SK-N-SH (cell line): ENCODE measurements at regions of chr4 and their contacts with region 1.

Region 1: GRCh38 chr4:88456757-88457306 is at the start of gene HERC5:
- DNase-seq: peak; percentile 93
- H3K4me3 ChIP-seq: peak within 1 kb of the TSS; percentile 58 to 68
- H3K27ac ChIP-seq: no peak within 1 kb of the TSS
- H3K4me1 ChIP-seq: peaks cover 0 to 5% of the 10 kb centered on the region in 2 experiments; a peak in 1 of 4 replicates
- H3K27me3 ChIP-seq: peaks cover 11% of the 10 kb centered on the region
- CTCF ChIP-seq: peak; percentile 71
- EP300 ChIP-seq: no peak
- RAD21 ChIP-seq: peak; percentile 71
- polyA plus RNA-seq, gene HERC5: 0.11 and 0.15 TPM in 2 replicates

Region 2: DNA sequence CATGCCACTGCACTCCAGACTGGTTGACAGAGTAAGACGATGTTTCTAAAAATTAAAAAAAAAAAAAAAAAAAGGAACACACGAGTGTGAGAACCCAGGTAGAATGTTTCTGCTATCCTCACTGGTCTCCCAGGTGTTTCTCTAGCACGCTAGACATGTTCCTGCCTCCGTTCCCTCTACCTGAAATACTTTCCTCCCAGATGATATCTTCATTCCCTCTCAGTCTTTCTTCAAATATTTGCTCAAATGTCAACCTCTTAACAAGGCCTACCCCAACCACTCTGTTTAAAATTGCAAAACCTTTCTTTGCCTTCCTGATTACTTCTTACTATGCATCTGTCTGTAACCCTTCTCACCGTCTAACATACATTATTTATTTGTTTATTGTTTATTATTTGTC is 238.9 kb before region 1 on chr4:
- CTCF ChIA-PET with region 1: interaction called, 12 read pairs
- POLR2A ChIA-PET with region 1: no interaction called
- DNase-seq: no peak
- H3K4me3 ChIP-seq: no peak overlapping the region
- H3K27ac ChIP-seq: no peak overlapping the region
- H3K4me1 ChIP-seq: no peaks in the 10 kb centered on the region
- H3K27me3 ChIP-seq: no peaks in the 10 kb centered on the region; the same call in 1 of the 2 replicates
- CTCF ChIP-seq: no peak
- EP300 ChIP-seq: no peak
- RAD21 ChIP-seq: no peak

Region 3: GRCh38 chr4:88366460-88366859 is 90.4 kb before region 1 on chr4:
- CTCF ChIA-PET with region 1: interaction called, 13 read pairs
- POLR2A ChIA-PET with region 1: no interaction called
- DNase-seq: no peak
- H3K4me3 ChIP-seq: no peak overlapping the region
- H3K27ac ChIP-seq: no peak overlapping the region
- H3K4me1 ChIP-seq: no peaks in the 10 kb centered on the region
- H3K27me3 ChIP-seq: no peaks in the 10 kb centered on the region; the same call in 1 of the 2 replicates
- CTCF ChIP-seq: no peak
- EP300 ChIP-seq: no peak
- RAD21 ChIP-seq: no peak

Region 4: DNA sequence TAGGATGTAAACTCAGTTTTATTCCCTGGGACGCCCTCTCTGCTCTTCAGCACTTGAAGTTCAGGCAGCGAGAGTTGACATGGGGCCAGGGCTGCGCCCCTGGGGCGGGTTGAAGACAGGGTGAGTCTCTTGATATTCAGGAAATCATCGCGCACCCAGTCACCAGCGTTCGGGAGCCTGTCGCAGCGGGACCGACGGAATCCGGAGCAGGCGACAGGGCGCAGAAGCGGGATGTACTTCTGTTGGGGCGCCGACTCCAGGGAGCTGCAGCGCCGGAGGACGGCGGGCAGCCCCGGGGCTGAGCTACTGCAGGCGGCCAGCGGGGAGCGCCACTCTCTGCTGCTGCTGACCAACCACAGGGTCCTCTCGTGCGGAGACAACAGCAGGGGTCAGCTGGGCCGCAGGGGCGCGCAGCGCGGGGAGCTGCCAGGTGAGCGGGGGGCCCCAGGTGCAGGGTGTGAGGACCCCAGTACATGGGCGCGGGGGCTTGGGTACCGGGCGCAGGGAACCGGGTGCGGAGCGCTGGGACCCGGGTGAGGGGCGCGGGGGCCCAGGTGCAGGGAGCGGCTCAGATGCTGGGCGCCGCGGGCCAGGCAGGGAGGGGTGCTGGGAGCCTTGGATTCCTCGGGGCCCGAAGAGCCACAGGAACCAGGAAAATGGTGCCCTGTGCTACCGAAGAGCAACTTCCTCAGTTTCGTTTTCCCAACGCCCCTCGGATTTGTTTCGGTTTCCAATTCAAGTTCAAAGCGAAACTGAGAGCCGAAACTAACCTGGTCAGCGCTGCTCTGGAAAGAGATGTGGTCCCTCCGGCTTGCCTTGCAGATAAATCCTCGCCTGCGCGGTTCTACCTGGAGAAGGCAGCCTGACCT is 77.9 kb before region 1 on chr4 and contains the start of gene HERC6:
- CTCF ChIA-PET with region 1: interaction called, 10 read pairs
- POLR2A ChIA-PET with region 1: no interaction called
- DNase-seq: peak; percentile 90
- H3K4me3 ChIP-seq: peak within 1 kb of the TSS; percentile 75 to 76
- H3K27ac ChIP-seq: peak within 1 kb of the TSS; percentile 37 to 56; a peak in 3 of 4 replicates
- H3K4me1 ChIP-seq: no peaks in the 10 kb centered on the region
- H3K27me3 ChIP-seq: no peaks in the 10 kb centered on the region
- CTCF ChIP-seq: peak; percentile 70
- EP300 ChIP-seq: no peak
- RAD21 ChIP-seq: peak; percentile 53
- polyA plus RNA-seq, gene HERC6: 1.6 and 1.7 TPM in 2 replicates

Region 5: DNA sequence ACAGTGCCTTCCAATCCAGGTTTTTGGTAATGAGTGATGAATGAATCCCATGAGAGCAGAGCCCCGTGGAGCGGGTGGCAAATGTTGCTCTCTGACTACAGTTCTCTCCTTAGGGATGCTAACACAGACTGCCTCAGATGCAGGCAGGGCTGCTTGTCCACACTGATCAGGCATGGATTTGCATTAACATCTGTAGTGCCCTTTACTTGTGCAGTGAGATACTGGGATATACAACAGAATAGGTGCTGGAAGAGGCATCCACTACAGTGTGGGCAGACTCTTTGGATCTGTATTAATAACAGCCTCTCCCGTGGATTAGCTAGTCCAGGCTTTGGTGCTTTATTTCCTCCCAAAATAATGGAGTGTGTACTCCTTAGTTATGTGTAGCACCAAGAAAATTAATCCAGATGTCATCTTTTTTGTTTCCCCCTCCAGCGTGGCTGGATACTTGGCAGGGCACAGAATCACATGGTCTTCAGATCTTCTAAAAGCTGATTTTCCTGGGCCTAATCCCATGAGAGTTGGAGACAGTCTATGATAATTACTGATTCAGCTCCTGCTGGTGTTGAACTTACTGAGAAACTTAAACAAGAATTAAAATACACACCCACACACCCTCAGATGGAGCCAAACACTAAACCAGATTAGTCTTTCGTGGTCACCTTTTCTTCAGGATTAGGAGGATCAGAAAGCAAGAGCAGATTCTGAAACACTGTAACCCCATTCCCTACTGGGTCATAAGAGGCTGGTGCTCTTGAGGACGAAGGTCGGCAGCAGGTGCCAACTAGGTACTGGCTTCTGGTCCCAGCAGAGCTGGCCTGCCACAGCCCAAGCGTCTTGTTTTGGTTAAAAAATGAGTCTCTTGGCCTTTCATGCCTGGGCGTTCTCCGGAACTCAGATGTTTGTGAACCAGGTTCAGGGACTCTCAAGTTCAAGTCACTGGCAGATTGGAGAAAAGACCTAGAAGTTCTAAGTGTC is 263.9 kb after region 1 on chr4:
- CTCF ChIA-PET with region 1: no interaction called
- POLR2A ChIA-PET with region 1: no interaction called
- DNase-seq: no peak
- H3K4me3 ChIP-seq: no peak overlapping the region
- H3K27ac ChIP-seq: no peak overlapping the region
- H3K4me1 ChIP-seq: no peaks in the 10 kb centered on the region
- H3K27me3 ChIP-seq: no peaks in the 10 kb centered on the region
- CTCF ChIP-seq: no peak
- EP300 ChIP-seq: no peak
- RAD21 ChIP-seq: no peak